Uterus (tissue), 4 donors: ENCODE measurements at regions of chr4 and their contacts with region 1.

Region 1: GRCh38 chr4:41307638-41308037 is 50.9 kb downstream of the UCHL1 start:
- DNase-seq: no peak
- H3K4me3 ChIP-seq: no peak overlapping the region
- H3K27ac ChIP-seq: no peak overlapping the region
- H3K4me1 ChIP-seq: no peaks in the 10 kb centered on the region
- H3K27me3 ChIP-seq: no peaks in the 10 kb centered on the region
- CTCF ChIP-seq: no peak
- POLR2A ChIP-seq: no peak

Region 2: GRCh38 chr4:41095973-41096372 is 211.7 kb before region 1 on chr4:
- intact Hi-C with region 1: no loop called
- DNase-seq: no peak
- H3K4me3 ChIP-seq: no peak overlapping the region
- H3K27ac ChIP-seq: no peak overlapping the region
- H3K4me1 ChIP-seq: peaks cover 0 to 3% of the 10 kb centered on the region in 2 donors
- H3K27me3 ChIP-seq: no peaks in the 10 kb centered on the region
- CTCF ChIP-seq: no peak
- POLR2A ChIP-seq: no peak

Region 3: DNA sequence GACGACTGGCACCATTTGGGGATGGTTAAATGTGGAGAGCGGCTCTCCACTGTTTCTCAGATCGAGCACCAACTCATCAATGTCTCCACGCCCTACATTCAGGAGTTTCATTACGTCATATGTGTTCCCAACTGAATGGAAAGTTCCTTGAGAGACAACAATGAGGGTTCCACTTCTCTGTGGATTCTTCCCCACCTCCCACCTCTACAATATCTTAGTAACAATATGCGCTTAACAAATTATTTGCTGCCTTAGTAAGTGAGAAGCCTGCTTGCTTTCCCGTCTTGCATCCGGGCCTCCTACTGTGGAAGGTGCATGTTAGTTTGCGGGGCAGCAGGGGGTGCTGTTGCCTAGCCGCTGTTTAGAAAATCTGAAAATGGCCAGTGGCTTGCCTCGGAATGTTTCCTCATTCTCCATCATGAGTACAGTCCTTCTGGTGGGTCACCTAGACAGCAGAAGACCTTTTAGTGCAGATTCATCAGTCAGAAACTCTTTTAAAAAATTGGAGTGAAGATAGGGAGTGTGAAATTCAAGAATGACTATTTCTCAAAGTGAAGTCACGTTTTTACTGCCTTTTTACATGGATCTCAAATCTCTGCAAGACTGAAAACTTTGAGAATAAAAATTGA is 385.2 kb after region 1 on chr4:
- intact Hi-C with region 1: no loop called
- DNase-seq: peak in 1 of 2 donors; percentile 16
- H3K4me3 ChIP-seq: no peak overlapping the region
- H3K27ac ChIP-seq: no peak overlapping the region
- H3K4me1 ChIP-seq: no peaks in the 10 kb centered on the region
- H3K27me3 ChIP-seq: no peaks in the 10 kb centered on the region
- CTCF ChIP-seq: peak; percentile 35 to 58 (median 47)
- POLR2A ChIP-seq: no peak

Region 4: DNA sequence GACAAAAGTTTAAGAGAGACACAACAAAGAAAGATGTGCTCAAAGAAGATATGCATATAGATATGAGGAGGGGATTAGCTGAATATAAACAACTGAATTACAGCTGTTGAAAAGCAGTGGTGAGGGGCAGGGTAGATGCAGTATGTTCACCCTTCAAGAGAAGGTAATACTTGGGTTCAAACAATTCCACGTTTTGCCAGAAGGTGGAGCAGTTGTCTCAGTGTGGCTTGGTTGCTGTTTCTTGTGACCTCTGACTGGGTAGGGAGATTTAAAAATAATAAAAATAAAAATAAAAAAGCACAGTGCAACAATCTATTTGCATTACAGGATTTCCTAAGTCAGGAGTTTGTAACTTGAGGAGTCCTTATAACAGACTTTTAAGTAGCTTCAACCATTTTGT is 417.6 kb after region 1 on chr4:
- intact Hi-C with region 1: loop called (anchors 5 kb)
- DNase-seq: no peak
- H3K4me3 ChIP-seq: no peak overlapping the region
- H3K27ac ChIP-seq: no peak overlapping the region
- H3K4me1 ChIP-seq: no peaks in the 10 kb centered on the region
- H3K27me3 ChIP-seq: no peaks in the 10 kb centered on the region
- CTCF ChIP-seq: no peak
- POLR2A ChIP-seq: no peak